IMR-90 (cell line): ENCODE measurements at regions of chr6 and their contacts with region 1.

Region 1: GRCh38 chr6:165729307-165729936 is 66.4 kb upstream of the PDE10A start:
- DNase-seq: peak; percentile 10
- ATAC-seq: peak; percentile 71
- H3K4me3 ChIP-seq: no peak overlapping the region
- H3K27ac ChIP-seq: no peak overlapping the region
- H3K4me1 ChIP-seq: 0 out of 2 replicates have a peak, but pooled peaks cover 2% of the 10 kb centered on the region
- H3K27me3 ChIP-seq: peaks cover 10% of the 10 kb centered on the region
- CTCF ChIP-seq: peak; percentile 60
- POLR2A ChIP-seq: no peak
- RAD21 ChIP-seq: peak; percentile 38; the same call in 1 of the 2 replicates

Region 2: GRCh38 chr6:164795056-164795815 is 934.2 kb before region 1 on chr6:
- CTCF ChIA-PET with region 1: no interaction called
- POLR2A ChIA-PET with region 1: no interaction called
- dilution Hi-C with region 1: no loop called
- in situ Hi-C with region 1: no loop called
- intact Hi-C with region 1: no loop called
- DNase-seq: no peak
- ATAC-seq: no peak
- H3K4me3 ChIP-seq: no peak overlapping the region
- H3K27ac ChIP-seq: no peak overlapping the region
- H3K4me1 ChIP-seq: no peaks in the 10 kb centered on the region
- H3K27me3 ChIP-seq: no peaks in the 10 kb centered on the region
- CTCF ChIP-seq: no peak
- POLR2A ChIP-seq: no peak
- RAD21 ChIP-seq: no peak

Region 3: DNA sequence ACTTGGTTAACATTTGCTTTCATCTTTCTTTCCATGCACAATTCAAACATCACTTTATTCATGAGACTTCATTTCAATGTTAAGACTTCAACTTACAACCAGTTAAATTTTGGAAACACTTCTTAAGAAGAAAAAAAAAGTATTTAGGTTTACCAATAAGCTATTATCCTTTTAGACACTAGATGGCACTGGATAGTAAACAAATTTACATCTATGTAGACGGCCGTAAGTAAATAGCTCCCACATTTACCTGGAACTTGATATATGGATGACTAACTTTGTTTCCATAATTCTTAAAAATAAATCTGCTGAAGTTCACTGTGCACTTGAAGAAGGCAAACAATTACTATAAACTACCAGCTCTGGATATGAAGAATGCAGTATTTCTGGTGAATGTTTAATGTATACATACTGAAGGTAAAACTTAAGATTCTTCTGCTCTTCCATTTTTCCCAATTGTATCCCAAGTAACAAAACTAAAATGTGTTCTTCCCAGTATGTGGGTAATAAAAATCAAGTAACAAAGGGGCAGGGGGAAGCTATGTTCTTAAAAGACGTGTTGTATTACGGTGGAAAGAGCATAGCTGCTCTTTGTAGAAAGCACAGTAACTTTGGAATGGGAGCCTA is 289.4 kb before region 1 on chr6:
- CTCF ChIA-PET with region 1: interaction called, 3 read pairs
- POLR2A ChIA-PET with region 1: no interaction called
- dilution Hi-C with region 1: no loop called
- in situ Hi-C with region 1: no loop called
- intact Hi-C with region 1: loop called (anchors 2 kb)
- DNase-seq: peak; percentile 73
- ATAC-seq: peak; percentile 65
- H3K4me3 ChIP-seq: no peak overlapping the region
- H3K27ac ChIP-seq: no peak overlapping the region
- H3K4me1 ChIP-seq: no peaks in the 10 kb centered on the region
- H3K27me3 ChIP-seq: no peaks in the 10 kb centered on the region
- CTCF ChIP-seq: peak; percentile 65
- POLR2A ChIP-seq: no peak
- RAD21 ChIP-seq: peak; percentile 68

Region 4: DNA sequence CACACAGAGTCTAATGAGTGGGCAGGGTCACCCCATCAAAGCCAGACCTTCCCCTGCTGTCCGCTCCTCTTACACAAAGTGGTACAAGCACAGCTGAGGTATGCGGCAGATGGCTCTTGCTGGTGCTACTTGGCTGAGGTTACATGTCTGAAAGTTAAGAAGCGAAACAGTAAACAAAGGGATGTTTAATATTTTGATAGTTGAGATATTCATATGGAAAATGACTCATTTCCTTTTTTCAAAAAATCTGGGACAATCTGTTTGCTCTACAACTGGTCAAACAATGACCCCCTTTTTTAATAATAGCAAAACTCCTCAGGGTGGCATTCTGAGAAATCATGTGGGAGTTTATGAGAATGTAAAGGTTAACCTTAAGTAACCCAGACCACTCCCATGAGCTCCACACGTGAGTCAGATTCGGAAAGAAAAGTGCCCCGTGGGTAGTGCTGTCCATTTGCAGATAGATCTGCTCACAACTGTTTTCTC is 192.9 kb after region 1 on chr6:
- CTCF ChIA-PET with region 1: no interaction called
- POLR2A ChIA-PET with region 1: no interaction called
- dilution Hi-C with region 1: no loop called
- in situ Hi-C with region 1: no loop called
- intact Hi-C with region 1: no loop called
- DNase-seq: peak; percentile 83
- ATAC-seq: peak; percentile 63
- H3K4me3 ChIP-seq: no peak overlapping the region
- H3K27ac ChIP-seq: peak overlapping the region; percentile 84
- H3K4me1 ChIP-seq: peaks cover 17% of the 10 kb centered on the region
- H3K27me3 ChIP-seq: no peaks in the 10 kb centered on the region
- CTCF ChIP-seq: no peak
- POLR2A ChIP-seq: no peak
- RAD21 ChIP-seq: no peak